Gastrocnemius medialis (tissue), 4 donors: ENCODE measurements at regions of chr15 and their contacts with region 1.

Region 1: DNA sequence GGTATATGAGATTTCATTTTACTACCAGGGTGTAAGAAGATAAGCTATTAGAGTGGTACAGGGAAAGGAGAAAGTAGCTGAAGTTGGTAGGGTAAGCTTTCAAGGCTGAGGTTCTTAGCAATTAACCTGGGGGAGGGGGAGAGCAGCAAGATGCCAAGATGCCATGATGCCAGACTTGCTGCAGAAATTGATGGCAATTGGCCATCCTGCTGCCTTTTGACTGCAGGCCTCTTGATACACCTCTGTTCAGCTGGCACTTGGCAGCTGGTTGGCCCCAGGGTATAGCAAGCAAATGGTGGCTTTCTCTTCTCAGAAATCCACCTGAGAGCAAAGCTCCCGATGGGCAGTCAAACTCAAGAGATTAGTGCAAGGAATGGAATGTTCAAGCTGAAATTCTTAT is 21.4 kb upstream of the DPH6 start:
- DNase-seq: no peak
- ATAC-seq: no peak
- H3K4me3 ChIP-seq: no peak overlapping the region
- H3K27ac ChIP-seq: no peak overlapping the region
- H3K4me1 ChIP-seq: no peaks in the 10 kb centered on the region
- H3K27me3 ChIP-seq: no peaks in the 10 kb centered on the region
- CTCF ChIP-seq: no peak
- POLR2A ChIP-seq: no peak

Region 2: DNA sequence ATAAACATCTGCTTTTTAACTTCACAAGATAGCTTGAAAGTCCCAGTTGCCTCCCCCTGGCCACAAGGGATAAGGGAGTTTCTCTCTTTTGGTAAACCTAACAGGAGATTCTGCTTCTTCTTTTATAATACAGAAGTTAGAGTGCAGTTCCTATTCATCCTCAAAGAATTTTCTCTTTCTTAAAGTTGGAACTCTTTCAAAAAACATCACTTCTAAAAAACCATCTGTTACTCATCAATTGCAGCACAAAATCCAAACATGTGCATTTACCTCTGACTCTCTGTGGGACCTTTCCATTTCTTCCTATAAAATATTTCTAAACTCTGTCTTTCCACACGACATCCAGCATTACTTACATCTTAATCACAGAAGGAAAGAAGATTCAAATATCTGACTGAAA is 26.5 kb before region 1 on chr15:
- in situ Hi-C with region 1: no loop called
- intact Hi-C with region 1: loop called (anchors 2 kb)
- DNase-seq: no peak
- ATAC-seq: no peak
- H3K4me3 ChIP-seq: no peak overlapping the region
- H3K27ac ChIP-seq: no peak overlapping the region
- H3K4me1 ChIP-seq: peaks cover 7% of the 10 kb centered on the region in 2 donors
- H3K27me3 ChIP-seq: no peaks in the 10 kb centered on the region
- CTCF ChIP-seq: no peak
- POLR2A ChIP-seq: no peak